Left ventricle myocardium inferior (tissue), 1 donor: ENCODE measurements at regions of chr9 and their contacts with region 1.

Region 1: DNA sequence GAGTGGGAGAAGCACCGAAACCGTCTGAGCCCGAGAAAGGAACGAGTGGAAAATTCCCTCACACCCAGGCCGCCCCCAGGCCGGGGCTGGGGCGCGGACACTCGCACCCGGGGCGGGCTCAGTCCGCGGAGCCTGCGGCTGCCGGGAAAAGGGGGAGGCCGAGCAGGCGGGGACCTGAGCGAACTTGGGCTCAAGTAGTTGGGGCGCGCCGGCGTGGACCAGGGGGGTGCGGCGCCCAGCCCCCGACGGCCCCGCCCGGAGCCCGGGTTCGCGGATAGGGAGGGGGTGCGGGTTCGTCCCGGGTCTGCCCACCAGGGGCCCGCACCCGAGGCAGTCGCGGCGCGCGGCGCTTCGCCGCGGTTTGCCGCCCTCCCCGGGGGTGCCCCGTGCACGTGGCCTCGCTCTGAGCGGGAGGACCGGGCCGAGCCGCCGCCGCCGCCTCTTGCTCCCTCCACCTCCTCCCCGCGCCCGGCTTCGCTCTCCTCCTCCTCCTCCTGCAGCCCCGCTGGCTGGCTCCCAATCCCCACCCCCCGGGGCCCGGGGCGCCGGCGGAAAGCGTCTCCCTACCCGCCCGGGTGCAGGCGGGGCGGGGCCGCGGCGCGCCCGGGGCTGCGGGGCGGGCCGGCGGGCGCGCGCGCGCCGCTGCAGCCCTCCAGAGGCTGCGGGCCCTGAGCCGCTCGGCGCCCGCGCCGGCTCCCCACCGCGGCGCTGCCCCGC is 1.1 kb upstream of the NFIB start:
- DNase-seq: peak; percentile 98
- H3K4me3 ChIP-seq: peak overlapping the region; percentile 80
- H3K27ac ChIP-seq: peak overlapping the region; percentile 100
- H3K4me1 ChIP-seq: peaks cover 70% of the 10 kb centered on the region
- H3K27me3 ChIP-seq: no peaks in the 10 kb centered on the region
- CTCF ChIP-seq: no peak

Region 2: GRCh38 chr9:13942695-13943094 is 372.4 kb before region 1 on chr9:
- intact Hi-C with region 1: no loop called
- DNase-seq: no peak
- H3K4me3 ChIP-seq: no peak overlapping the region
- H3K27ac ChIP-seq: peak overlapping the region; percentile 8
- H3K4me1 ChIP-seq: peaks cover 31% of the 10 kb centered on the region
- H3K27me3 ChIP-seq: no peaks in the 10 kb centered on the region
- CTCF ChIP-seq: no peak

Region 3: GRCh38 chr9:14096258-14096922 is 218.7 kb before region 1 on chr9:
- intact Hi-C with region 1: loop called (anchors 10 kb)
- DNase-seq: no peak
- H3K4me3 ChIP-seq: peak overlapping the region; percentile 52
- H3K27ac ChIP-seq: peak overlapping the region; percentile 88
- H3K4me1 ChIP-seq: peaks cover 80% of the 10 kb centered on the region
- H3K27me3 ChIP-seq: no peaks in the 10 kb centered on the region
- CTCF ChIP-seq: no peak

Region 4: GRCh38 chr9:14428781-14429230 is 113.7 kb after region 1 on chr9:
- intact Hi-C with region 1: no loop called
- DNase-seq: peak; percentile 67
- H3K4me3 ChIP-seq: peak overlapping the region; percentile 2
- H3K27ac ChIP-seq: peak overlapping the region; percentile 66
- H3K4me1 ChIP-seq: peaks cover 41% of the 10 kb centered on the region
- H3K27me3 ChIP-seq: no peaks in the 10 kb centered on the region
- CTCF ChIP-seq: peak; percentile 84